HEK293T (cell line): ENCODE measurements at regions of chr9 and their contacts with region 1.

Region 1: GRCh38 chr9:125472926-125473701 is 211.5 kb downstream of the GAPVD1 start:
- DNase-seq: peak; percentile 69

Region 2: GRCh38 chr9:125462861-125463291 is 10.2 kb before region 1 on chr9:
- CTCF ChIA-PET with region 1: interaction called, 11 read pairs
- POLR2A ChIA-PET with region 1: no interaction called
- DNase-seq: no peak

Region 3: GRCh38 chr9:125486576-125486975 is 13.5 kb after region 1 on chr9:
- CTCF ChIA-PET with region 1: interaction called, 10 read pairs
- POLR2A ChIA-PET with region 1: no interaction called
- DNase-seq: no peak